SK-N-SH (cell line): ENCODE measurements at regions of chr4 and their contacts with region 1.

Region 1: GRCh38 chr4:174120446-174121295 is 162.8 kb downstream of the FBXO8 start:
- DNase-seq: peak; percentile 69
- H3K4me3 ChIP-seq: peak overlapping the region; percentile 40 to 59
- H3K27ac ChIP-seq: peak overlapping the region; percentile 49 to 100; a peak in 3 of 4 replicates
- H3K4me1 ChIP-seq: peaks cover 4 to 11% of the 10 kb centered on the region in 2 experiments; a peak in 2 of 4 replicates
- H3K27me3 ChIP-seq: no peaks in the 10 kb centered on the region
- CTCF ChIP-seq: peak; percentile 72
- EP300 ChIP-seq: peak; percentile 5 to 67; a peak in 1 of 4 replicates
- RAD21 ChIP-seq: peak; percentile 79

Region 2: GRCh38 chr4:173522123-173522950 is 598.3 kb before region 1 on chr4:
- CTCF ChIA-PET with region 1: interaction called, 6 read pairs
- POLR2A ChIA-PET with region 1: interaction called, 19 read pairs
- DNase-seq: peak; percentile 73
- H3K4me3 ChIP-seq: peak overlapping the region; percentile 61 to 92
- H3K27ac ChIP-seq: peak overlapping the region; percentile 99
- H3K4me1 ChIP-seq: peaks cover 23 to 30% of the 10 kb centered on the region in 2 experiments
- H3K27me3 ChIP-seq: no peaks in the 10 kb centered on the region
- CTCF ChIP-seq: peak; percentile 22
- EP300 ChIP-seq: peak in 1 of 2 experiments; percentile 82; a peak in 2 of 4 replicates
- RAD21 ChIP-seq: no peak

Region 3: DNA sequence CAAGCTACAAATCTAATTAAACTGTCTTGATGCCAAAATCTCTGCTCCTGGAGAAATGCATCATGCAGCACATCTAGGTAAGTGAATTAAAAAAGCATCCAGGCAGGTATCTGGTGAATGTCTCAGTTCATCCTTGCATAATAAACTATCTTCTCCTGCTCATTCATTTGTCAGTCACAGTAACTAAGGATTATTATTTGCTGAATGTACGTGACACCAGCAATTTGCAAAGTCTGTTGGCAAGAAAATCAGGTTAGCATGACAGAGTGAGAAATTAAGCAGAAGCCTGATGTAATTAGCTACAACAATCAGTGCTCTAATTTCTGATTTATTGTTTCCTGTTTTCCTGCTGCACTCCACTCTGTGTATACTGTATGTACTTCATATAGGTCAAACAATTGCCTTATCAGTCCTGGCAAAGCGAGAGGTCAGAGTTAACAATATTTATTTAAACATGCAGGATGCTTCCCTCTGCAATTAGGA is 50.8 kb before region 1 on chr4:
- CTCF ChIA-PET with region 1: interaction called, 8 read pairs
- POLR2A ChIA-PET with region 1: interaction called, 19 read pairs
- DNase-seq: peak; percentile 69
- H3K4me3 ChIP-seq: no peak overlapping the region
- H3K27ac ChIP-seq: peak overlapping the region in 1 of 2 experiments; percentile 100; a peak in 2 of 4 replicates
- H3K4me1 ChIP-seq: peaks cover 0 to 26% of the 10 kb centered on the region in 2 experiments; a peak in 2 of 4 replicates
- H3K27me3 ChIP-seq: no peaks in the 10 kb centered on the region
- CTCF ChIP-seq: no peak
- EP300 ChIP-seq: peak; percentile 82 to 100
- RAD21 ChIP-seq: peak; percentile 46

Region 4: DNA sequence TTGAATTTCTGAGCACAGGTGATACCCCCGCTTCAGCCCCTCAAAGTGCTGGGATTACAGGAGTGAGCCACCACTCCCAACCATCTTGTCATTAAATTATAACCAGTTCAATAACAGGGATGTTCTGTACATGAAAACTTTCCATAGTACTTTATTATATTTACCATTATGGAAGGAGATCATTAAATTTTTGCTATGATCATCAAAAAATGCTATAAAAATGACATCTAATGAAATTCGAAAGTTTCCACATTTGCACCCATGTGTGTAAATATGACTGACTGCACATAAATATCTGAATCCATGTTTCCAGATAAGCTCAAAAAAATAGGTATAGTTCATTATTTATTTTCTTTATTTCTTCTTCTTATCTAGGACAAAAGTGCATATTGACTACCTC is 19.8 kb before region 1 on chr4:
- CTCF ChIA-PET with region 1: no interaction called
- POLR2A ChIA-PET with region 1: no interaction called
- DNase-seq: no peak
- H3K4me3 ChIP-seq: no peak overlapping the region
- H3K27ac ChIP-seq: peak overlapping the region in 1 of 2 experiments; percentile 30; a peak in 1 of 4 replicates
- H3K4me1 ChIP-seq: peaks cover 0 to 4% of the 10 kb centered on the region in 2 experiments; a peak in 2 of 4 replicates
- H3K27me3 ChIP-seq: no peaks in the 10 kb centered on the region
- CTCF ChIP-seq: no peak
- EP300 ChIP-seq: no peak
- RAD21 ChIP-seq: no peak

Region 5: DNA sequence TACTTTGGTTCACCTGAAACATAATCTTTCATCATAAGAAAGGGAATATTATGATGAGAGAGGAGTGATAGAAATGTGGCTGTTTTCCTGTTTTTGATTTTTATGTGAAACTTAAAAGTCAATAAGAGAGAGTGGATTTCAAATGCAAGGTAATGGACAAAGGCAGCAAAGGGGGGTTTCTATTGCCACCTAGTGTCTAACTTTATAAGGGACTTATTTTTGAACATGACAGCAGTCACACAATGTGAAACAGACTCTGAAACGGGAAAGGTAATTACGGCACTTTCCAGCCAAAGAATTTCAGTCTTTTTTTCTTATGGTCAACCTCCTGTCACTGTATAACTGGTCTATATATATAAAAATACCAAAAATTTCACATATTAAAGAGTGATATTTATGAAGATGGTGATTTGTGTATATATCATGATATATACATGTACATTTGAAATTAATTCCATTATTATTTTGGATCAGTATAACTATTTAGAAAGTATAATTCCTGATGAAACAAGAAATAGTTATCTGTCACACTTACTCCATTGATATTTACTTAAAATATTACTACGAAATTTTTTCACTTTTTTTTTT is 35.7 kb after region 1 on chr4:
- CTCF ChIA-PET with region 1: interaction called, 14 read pairs
- POLR2A ChIA-PET with region 1: interaction called, 16 read pairs
- DNase-seq: peak; percentile 27
- H3K4me3 ChIP-seq: peak overlapping the region in 1 of 2 experiments; percentile 40; a peak in 1 of 4 replicates
- H3K27ac ChIP-seq: peak overlapping the region; percentile 74 to 100; a peak in 3 of 4 replicates
- H3K4me1 ChIP-seq: peaks cover 40 to 51% of the 10 kb centered on the region in 2 experiments; a peak in 3 of 4 replicates
- H3K27me3 ChIP-seq: no peaks in the 10 kb centered on the region
- CTCF ChIP-seq: peak; percentile 76
- EP300 ChIP-seq: peak in 1 of 2 experiments; percentile 56; a peak in 1 of 4 replicates
- RAD21 ChIP-seq: peak; percentile 94

Region 6: DNA sequence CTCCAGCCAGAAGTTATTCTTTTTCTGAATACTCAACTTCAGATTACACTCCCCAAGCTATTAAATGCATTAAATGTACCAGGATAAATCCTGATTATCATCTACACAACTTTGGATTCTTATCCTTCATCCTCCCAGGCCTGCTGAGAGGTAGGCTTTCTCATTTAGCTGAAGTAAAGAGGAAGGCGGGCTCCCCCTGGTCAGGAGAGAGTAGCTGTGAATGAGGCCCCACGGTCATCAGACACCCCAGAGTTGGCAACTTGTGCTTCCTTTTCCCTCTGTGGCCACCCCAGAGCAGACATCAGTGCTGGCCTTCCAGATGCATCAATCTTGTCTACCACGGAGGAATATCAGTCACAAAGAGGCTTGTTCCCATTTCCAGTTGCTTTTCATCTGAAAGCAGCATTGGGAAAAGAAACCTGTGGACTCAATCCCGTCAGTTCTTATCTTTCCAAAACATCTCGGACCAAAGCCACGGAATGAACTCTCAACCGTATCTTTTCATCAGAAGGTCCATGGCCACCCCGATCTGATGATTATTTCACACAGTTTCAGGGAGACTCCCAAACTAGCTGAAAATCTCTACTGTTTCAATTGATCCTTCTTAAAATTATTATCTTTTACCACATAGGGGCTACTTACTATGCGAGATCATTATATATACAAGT is 83.6 kb after region 1 on chr4:
- CTCF ChIA-PET with region 1: interaction called, 11 read pairs
- POLR2A ChIA-PET with region 1: interaction called, 5 read pairs
- DNase-seq: peak; percentile 50
- H3K4me3 ChIP-seq: peak overlapping the region in 1 of 2 experiments; percentile 2; a peak in 2 of 4 replicates
- H3K27ac ChIP-seq: peak overlapping the region; percentile 36 to 99; a peak in 3 of 4 replicates
- H3K4me1 ChIP-seq: peaks cover 30 to 38% of the 10 kb centered on the region in 2 experiments; a peak in 3 of 4 replicates
- H3K27me3 ChIP-seq: no peaks in the 10 kb centered on the region
- CTCF ChIP-seq: no peak
- EP300 ChIP-seq: peak in 1 of 2 experiments; percentile 32; a peak in 1 of 4 replicates
- RAD21 ChIP-seq: peak; percentile 13; the same call in 1 of the 2 replicates